Activated naive CD4-positive, alpha-beta T cell treated with anti-CD3 and anti-CD28 coated beads, Interleukin-2, amount 10 ng/mL, durations not matched to agents 7 days and 5 days (primary cell): ENCODE measurements at regions of chr6 and their contacts with region 1.

Region 1: DNA sequence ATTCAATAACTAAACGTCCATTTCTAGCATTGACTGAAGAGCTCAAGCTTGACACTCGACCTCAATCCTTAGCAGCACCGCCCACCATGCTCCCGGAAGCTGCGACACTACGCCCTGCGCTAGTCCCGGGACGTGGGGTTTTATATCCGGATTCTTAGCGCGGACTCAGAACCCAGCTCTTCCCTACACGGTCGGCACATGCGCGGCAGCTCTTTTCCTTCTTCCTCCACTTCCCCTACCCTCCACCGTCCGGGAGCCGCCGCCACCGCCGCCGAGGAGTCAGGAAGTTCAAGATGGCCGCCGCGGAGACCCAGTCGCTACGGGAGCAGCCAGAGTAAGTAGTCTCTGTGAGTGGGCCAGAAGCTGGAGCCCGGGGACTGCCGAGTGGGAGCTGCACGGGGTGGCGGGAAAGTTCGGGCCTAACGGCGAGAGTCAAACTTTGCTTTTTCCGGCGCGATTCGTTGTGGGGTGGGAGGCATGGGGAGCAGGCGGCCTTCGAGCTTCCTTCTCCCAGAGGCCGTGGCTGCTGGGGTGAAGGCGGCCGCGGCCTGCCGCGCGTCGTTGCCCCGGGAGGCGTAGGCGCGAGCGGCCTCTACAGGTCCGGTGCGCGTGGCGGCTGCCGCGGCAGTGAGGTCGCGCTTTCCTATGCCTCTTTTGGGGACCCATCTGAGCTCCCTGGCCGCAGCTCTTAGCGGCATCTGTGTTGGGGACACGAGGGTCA is 57.6 kb downstream of the FAM217A start:
- DNase-seq: peak; percentile 93
- H3K4me3 Mint-ChIP-seq: peak overlapping the region; percentile 91
- H3K27ac Mint-ChIP-seq: peak overlapping the region; percentile 94
- H3K4me1 Mint-ChIP-seq: peaks cover 64% of the 10 kb centered on the region
- H3K27me3 Mint-ChIP-seq: peaks cover 4% of the 10 kb centered on the region

Region 2: DNA sequence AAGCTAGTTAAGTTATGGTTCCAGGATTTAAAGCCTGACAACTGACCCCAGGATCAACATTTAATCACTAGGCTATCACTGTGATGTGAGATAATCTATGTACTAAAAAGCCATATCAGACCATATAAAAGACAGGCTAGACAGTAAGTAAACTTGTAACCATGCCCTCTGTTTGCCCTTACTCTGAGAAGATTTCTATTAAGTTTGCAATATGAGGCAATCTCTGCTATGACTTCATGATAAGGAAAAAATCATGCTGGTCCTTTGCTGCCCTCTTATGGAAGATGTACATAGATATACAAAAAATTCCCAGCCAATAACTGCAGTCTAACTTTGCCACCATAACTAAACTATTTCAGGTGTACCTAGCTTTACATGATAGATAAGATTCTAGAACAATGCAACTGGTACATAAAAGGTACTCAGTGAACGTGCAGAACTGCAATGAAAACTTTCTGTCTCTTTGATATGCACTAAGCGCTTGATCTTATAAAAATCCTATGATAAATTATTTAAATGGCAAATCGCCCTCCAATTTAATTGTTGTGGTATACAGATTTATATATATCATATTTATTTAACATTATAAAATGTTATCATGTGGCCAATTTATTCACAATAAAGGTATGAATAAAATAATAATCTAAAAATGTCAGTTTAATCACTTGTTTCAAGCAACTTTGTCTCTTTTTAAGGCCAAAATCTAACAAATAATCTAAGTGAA is 12.8 kb before region 1 on chr6:
- CTCF ChIA-PET with region 1: interaction called, 12 read pairs
- DNase-seq: no peak
- H3K4me3 Mint-ChIP-seq: no peak overlapping the region
- H3K27ac Mint-ChIP-seq: no peak overlapping the region
- H3K4me1 Mint-ChIP-seq: peaks cover 43% of the 10 kb centered on the region
- H3K27me3 Mint-ChIP-seq: no peaks in the 10 kb centered on the region